Right cardiac atrium (tissue), 5 donors: ENCODE measurements at regions of chrX and their contacts with region 1.

Region 1: GRCh38 chrX:138745196-138745595 is 33.7 kb upstream of the FGF13 start:
- DNase-seq: no peak
- ATAC-seq: peak in 1 of 2 donors; percentile 32
- H3K4me3 ChIP-seq: no peak overlapping the region
- H3K27ac ChIP-seq: no peak overlapping the region
- H3K4me1 ChIP-seq: no peaks in the 10 kb centered on the region
- H3K27me3 ChIP-seq: no peaks in the 10 kb centered on the region

Region 2: DNA sequence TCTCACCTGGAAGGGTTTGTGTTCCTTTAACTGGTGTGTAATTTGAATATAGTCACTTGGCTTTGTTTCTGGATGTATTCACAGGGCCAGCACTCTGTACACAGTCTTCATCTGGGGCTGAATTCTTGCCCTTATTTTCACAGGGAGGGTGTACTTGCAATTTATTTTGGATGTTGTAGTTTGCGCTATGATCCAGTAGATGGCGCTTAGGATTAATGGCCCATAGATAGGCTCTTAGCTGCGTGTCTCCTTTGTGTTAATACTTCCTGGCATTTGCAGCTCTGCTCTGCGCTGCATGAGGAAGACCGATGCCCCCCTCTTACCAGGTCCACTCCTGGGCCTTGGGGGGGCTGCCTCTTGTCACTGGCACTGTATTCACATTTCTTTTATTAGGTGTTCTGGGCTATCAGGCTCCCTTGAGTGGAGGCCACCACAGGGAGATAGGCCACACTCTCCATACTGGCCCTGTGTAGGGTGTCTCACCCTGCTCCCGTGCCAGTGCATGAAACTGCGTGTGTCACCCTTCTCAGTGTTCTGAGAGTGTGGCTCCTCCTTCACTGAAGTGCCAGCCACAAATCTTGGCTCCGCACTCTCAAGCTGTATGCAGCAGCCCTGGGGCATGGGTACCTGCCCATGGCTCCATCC is 617.0 kb before region 1 on chrX:
- intact Hi-C with region 1: loop called (anchors 5 to 10 kb)
- DNase-seq: peak in 1 of 3 donors; percentile 18
- ATAC-seq: peak in 1 of 2 donors; percentile 51
- H3K4me3 ChIP-seq: no peak overlapping the region
- H3K27ac ChIP-seq: no peak overlapping the region
- H3K4me1 ChIP-seq: no peaks in the 10 kb centered on the region
- H3K27me3 ChIP-seq: no peaks in the 10 kb centered on the region

Region 3: DNA sequence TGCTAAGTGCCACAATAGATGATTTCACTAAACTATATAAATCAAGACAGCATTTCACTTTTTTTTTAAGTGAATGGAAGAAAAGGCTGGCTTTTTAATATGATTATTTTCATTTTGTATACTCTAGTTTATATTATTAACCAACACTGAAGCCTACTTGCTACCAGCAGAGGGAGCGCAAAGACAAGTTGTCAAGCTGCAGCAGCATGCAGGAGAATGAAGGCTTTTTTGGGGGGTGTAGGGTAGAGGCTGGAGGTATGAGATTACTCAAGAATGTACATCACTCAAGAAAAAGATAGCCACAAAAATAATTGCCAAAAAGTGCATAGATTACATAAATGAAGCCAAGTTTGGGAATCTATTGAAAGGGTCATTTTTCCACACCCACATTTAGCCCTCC is 553.2 kb before region 1 on chrX:
- intact Hi-C with region 1: loop called in 3 of 4 experiments (anchors 5 to 10 kb)
- DNase-seq: no peak
- ATAC-seq: no peak
- H3K4me3 ChIP-seq: no peak overlapping the region
- H3K27ac ChIP-seq: no peak overlapping the region
- H3K4me1 ChIP-seq: no peaks in the 10 kb centered on the region
- H3K27me3 ChIP-seq: no peaks in the 10 kb centered on the region

Region 4: GRCh38 chrX:138519301-138519700 is 225.9 kb before region 1 on chrX:
- intact Hi-C with region 1: no loop called
- DNase-seq: no peak
- ATAC-seq: no peak
- H3K4me3 ChIP-seq: no peak overlapping the region
- H3K27ac ChIP-seq: no peak overlapping the region
- H3K4me1 ChIP-seq: no peaks in the 10 kb centered on the region
- H3K27me3 ChIP-seq: no peaks in the 10 kb centered on the region

Region 5: DNA sequence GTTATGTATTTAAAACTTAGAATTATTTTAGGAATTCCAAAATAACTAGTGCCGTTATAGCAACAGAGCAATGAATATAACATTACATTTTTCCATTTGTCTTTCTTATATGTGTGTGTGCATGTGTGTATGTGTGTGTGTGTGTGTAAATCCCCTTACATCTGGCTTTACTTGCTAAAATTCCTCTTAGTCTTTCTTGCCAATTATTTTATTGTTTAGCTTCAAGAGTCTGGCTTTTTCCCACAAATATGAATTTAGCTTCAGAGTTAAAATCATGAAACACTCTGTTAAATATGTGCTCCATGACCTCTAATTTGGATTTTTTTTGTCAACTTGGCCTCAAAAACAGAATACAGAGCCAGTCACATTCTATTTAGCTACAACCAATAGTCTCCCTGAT is 52.6 kb before region 1 on chrX:
- intact Hi-C with region 1: no loop called
- DNase-seq: no peak
- ATAC-seq: no peak
- H3K4me3 ChIP-seq: no peak overlapping the region
- H3K27ac ChIP-seq: no peak overlapping the region
- H3K4me1 ChIP-seq: no peaks in the 10 kb centered on the region
- H3K27me3 ChIP-seq: no peaks in the 10 kb centered on the region